GM10248 (cell line): ENCODE measurements at regions of chr4 and their contacts with region 1.

Region 1: GRCh38 chr4:173346074-173346473 is 11.9 kb upstream of the HMGB2 start:
- DNase-seq: no peak
- CTCF ChIP-seq: no peak

Region 2: GRCh38 chr4:173325007-173325736 is 20.9 kb before region 1 on chr4:
- CTCF ChIA-PET with region 1: no interaction called
- POLR2A ChIA-PET with region 1: no interaction called
- DNase-seq: no peak
- CTCF ChIP-seq: no peak

Region 3: DNA sequence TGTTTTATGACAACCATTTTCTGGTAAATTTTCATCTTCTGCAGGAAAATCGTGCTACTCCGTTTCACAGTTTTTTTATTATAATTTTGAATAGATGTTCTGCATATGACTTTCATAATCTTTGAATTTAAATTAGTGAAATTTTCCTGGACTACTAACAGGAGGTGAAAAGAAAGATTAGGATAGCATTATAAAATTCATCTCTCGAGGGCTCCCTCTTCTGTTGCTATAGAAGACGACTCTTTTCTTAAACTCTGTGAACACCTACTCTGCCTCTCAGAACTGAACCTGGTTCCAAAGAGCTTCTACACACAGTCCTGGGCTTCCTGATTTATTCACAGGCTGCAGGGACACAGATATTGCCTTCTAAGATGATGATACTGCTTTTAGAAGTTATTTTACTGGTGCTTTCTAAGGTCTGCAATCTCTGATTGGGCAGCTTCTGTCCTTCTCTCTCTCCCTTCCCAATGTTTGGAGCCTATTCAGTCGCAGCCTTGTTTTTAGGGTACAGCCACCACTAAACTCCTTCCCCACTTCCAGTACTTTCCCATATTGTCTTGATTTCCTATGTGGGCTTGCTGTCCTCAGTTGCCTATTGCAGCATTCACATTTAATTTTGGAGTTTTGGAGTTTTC is 14.6 kb after region 1 on chr4:
- CTCF ChIA-PET with region 1: interaction called, 10 read pairs
- POLR2A ChIA-PET with region 1: no interaction called
- DNase-seq: no peak
- CTCF ChIP-seq: no peak

Region 4: DNA sequence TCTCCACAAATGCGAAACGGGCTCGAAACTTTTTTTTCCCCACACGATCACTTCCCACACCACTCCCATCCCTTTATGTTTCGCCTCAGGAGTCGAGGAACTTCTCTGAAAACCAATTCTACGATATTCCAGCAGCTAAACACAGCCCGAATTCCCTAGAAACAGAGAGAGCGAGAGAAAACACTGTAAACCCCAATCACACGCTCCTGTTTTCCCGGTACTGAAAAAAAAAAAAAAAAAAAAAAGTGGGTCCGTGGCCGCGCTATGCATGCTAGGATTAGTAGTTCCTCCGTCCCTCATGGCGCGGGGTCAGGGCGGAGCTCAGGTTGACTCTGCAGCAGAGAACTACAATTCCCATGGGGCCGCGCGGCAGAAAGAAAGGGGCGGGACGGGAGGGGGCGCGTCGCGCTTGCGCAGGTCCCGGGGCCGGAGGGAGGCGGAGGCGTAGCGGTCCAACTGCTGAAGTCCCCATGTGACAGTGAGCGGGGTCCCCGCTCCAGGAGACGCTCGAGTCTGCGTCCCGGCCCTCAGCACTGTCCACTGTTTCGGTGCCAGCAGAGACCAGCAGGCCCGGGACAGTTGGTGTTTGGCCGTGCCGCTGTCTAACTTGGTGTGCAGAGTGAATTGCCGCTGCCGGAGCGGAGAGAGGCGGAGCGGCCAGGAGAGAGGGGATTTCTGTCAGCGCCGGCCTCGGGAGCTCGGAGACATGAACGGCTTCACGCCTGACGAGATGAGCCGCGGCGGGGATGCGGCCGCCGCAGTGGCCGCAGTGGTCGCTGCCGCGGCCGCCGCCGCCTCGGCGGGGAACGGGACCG is 24.6 kb after region 1 on chr4 and contains the start of gene SAP30:
- CTCF ChIA-PET with region 1: interaction called, 16 read pairs
- POLR2A ChIA-PET with region 1: no interaction called
- DNase-seq: peak; percentile 95
- CTCF ChIP-seq: no peak